Activated CD8-positive, alpha-beta T cell treated with anti-CD3 and anti-CD28 coated beads for 36 hours (primary cell): ENCODE measurements at regions of chr13 and their contacts with region 1.

Region 1: DNA sequence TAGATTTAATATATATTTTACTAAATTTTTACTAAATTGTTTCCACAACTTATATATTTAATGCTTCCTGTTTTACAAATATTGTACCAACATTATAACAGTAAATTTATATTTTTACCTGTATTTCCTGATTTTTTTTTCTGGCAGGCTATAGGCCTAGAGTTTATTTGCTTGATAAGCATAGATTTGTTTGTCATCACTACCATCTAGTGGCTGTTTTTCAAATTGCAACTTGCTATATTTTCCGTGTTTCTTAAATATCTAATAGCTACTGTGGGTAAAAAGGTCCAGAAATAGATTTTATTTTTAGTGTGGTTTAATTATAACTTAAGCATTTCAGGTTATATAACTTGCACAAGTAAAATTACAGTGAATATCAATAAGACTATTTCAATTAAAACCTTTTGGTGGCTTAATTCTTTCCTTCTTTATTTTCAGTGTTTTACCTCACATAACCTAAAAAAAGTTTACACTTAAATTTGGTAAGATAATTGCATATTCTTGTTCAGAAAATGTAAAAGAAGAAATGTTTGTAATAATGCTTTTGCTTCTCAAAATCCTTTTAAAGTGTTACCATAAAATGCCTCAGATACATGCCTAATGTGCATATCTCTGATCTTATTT is 60.6 kb downstream of the NDFIP2 start:
- DNase-seq: no peak
- ATAC-seq: peak; percentile 62
- H3K4me3 Mint-ChIP-seq: no peak overlapping the region
- H3K27ac Mint-ChIP-seq: no peak overlapping the region
- H3K4me1 Mint-ChIP-seq: peaks cover 3% of the 10 kb centered on the region
- H3K27me3 Mint-ChIP-seq: no peaks in the 10 kb centered on the region
- CTCF ChIP-seq: peak; percentile 97

Region 2: DNA sequence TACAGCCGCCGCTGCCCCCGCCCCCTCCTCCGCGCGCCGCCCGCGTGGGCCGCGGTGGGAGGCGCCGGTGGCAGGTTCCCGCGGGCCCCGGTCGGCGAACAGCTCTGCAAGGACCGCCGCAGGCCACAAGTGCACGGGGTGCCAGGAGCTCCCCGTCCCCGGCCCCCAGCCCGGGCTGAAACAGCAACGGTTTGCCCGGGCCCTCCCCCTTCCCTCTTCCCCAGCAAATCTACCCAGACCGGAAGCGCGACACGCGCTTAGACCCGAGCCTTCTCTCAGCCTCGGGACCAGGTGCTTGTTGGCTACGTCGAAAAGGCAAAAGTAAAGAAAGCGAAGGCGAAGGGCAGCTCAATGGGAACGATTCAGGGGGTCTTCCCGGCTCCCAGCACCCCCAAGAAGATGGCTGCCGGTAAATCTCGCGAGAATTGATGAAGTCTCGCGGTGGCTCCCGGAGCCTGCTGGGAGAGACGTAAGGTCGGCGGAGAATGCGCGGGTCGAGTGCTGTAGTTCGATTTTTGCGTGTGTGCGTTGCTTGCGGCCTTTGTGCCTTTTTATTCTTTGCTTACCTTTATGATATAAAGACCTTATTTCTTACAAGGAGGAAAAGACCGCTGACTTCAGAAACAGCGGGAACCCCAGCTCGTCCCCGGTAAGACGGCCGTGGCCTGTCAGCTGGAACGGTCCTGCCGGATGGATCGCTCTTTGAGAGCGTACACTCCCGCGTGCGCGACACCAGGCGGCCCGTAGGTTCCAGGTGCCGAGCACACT is 135.5 kb before region 1 on chr13 and contains the start of gene RBM26:
- CTCF ChIA-PET with region 1: interaction called, 15 read pairs
- POLR2A ChIA-PET with region 1: interaction called, 4 read pairs
- intact Hi-C with region 1: no loop called
- DNase-seq: peak; percentile 96
- ATAC-seq: peak; percentile 90
- H3K4me3 Mint-ChIP-seq: no peak within 1 kb of the TSS
- H3K27ac Mint-ChIP-seq: peak within 1 kb of the TSS; percentile 98
- H3K4me1 Mint-ChIP-seq: peaks cover 49% of the 10 kb centered on the region
- H3K27me3 Mint-ChIP-seq: no peaks in the 10 kb centered on the region
- CTCF ChIP-seq: no peak
- total RNA-seq, gene RBM26: 57.6 to 61.1 TPM

Region 3: GRCh38 chr13:79413521-79413920 is 128.0 kb before region 1 on chr13:
- CTCF ChIA-PET with region 1: interaction called, 24 read pairs
- POLR2A ChIA-PET with region 1: no interaction called
- intact Hi-C with region 1: no loop called
- DNase-seq: peak; percentile 10
- ATAC-seq: peak; percentile 34
- H3K4me3 Mint-ChIP-seq: no peak overlapping the region
- H3K27ac Mint-ChIP-seq: no peak overlapping the region
- H3K4me1 Mint-ChIP-seq: peaks cover 17% of the 10 kb centered on the region
- H3K27me3 Mint-ChIP-seq: no peaks in the 10 kb centered on the region
- CTCF ChIP-seq: no peak

Region 4: DNA sequence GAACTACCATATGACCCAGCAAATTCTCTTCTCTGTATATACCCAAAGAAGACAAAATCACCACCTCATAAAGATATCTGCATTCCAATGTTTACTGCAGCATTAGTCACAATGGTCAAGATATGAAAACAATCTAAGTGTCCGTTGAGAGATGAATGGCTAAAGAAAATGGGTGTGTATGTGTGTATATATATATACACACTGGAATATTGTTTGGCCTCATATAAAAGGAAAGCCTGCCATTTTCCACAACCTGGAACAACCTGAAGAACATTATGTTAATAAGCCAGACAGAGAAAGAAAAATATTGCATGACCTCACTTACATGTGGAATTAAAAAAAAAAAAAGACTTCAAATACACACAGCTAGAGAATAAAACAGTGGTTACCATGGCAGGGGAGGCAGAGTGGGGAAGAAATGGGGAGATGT is 106.0 kb before region 1 on chr13:
- CTCF ChIA-PET with region 1: interaction called, 16 read pairs
- POLR2A ChIA-PET with region 1: no interaction called
- intact Hi-C with region 1: no loop called
- DNase-seq: no peak
- ATAC-seq: no peak
- H3K4me3 Mint-ChIP-seq: no peak overlapping the region
- H3K27ac Mint-ChIP-seq: no peak overlapping the region
- H3K4me1 Mint-ChIP-seq: peaks cover 16% of the 10 kb centered on the region
- H3K27me3 Mint-ChIP-seq: no peaks in the 10 kb centered on the region
- CTCF ChIP-seq: no peak

Region 5: GRCh38 chr13:79440958-79441528 is 100.5 kb before region 1 on chr13:
- CTCF ChIA-PET with region 1: interaction called, 16 read pairs
- POLR2A ChIA-PET with region 1: no interaction called
- intact Hi-C with region 1: no loop called
- DNase-seq: no peak
- ATAC-seq: no peak
- H3K4me3 Mint-ChIP-seq: no peak overlapping the region
- H3K27ac Mint-ChIP-seq: no peak overlapping the region
- H3K4me1 Mint-ChIP-seq: peaks cover 9% of the 10 kb centered on the region
- H3K27me3 Mint-ChIP-seq: no peaks in the 10 kb centered on the region
- CTCF ChIP-seq: no peak

Region 6: GRCh38 chr13:79525064-79525857 is 16.3 kb before region 1 on chr13:
- CTCF ChIA-PET with region 1: interaction called, 11 read pairs
- POLR2A ChIA-PET with region 1: no interaction called
- intact Hi-C with region 1: no loop called
- DNase-seq: peak; percentile 31
- ATAC-seq: peak; percentile 65
- H3K4me3 Mint-ChIP-seq: no peak overlapping the region
- H3K27ac Mint-ChIP-seq: no peak overlapping the region
- H3K4me1 Mint-ChIP-seq: peaks cover 8% of the 10 kb centered on the region
- H3K27me3 Mint-ChIP-seq: no peaks in the 10 kb centered on the region
- CTCF ChIP-seq: no peak